Heart left ventricle (tissue), 16 donors: ENCODE measurements at regions of chr9 and their contacts with region 1.

Region 1: GRCh38 chr9:394347-395052 is 179.8 kb downstream of the DOCK8 start:
- DNase-seq: no peak
- ATAC-seq: no peak
- H3K4me3 ChIP-seq: no peak overlapping the region
- H3K27ac ChIP-seq: no peak overlapping the region
- H3K4me1 ChIP-seq: no peaks in the 10 kb centered on the region
- H3K27me3 ChIP-seq: no peaks in the 10 kb centered on the region
- CTCF ChIP-seq: no peak
- POLR2A ChIP-seq: no peak

Region 2: GRCh38 chr9:419571-420402 is 25.3 kb after region 1 on chr9:
- intact Hi-C with region 1: loop called in 1 of 10 experiments (anchors 2 kb)
- DNase-seq: no peak
- ATAC-seq: no peak
- H3K4me3 ChIP-seq: no peak overlapping the region
- H3K27ac ChIP-seq: no peak overlapping the region
- H3K4me1 ChIP-seq: no peaks in the 10 kb centered on the region
- H3K27me3 ChIP-seq: no peaks in the 10 kb centered on the region
- CTCF ChIP-seq: no peak
- POLR2A ChIP-seq: no peak

Region 3: GRCh38 chr9:792282-793260 is 398.1 kb after region 1 on chr9:
- intact Hi-C with region 1: loop called in 1 of 10 experiments (anchors 10 kb)
- DNase-seq: no peak
- ATAC-seq: no peak
- H3K4me3 ChIP-seq: no peak overlapping the region
- H3K27ac ChIP-seq: no peak overlapping the region
- H3K4me1 ChIP-seq: no peaks in the 10 kb centered on the region
- H3K27me3 ChIP-seq: peaks cover 0 to 4% (median 0%) of the 10 kb centered on the region in 9 donors
- CTCF ChIP-seq: no peak
- POLR2A ChIP-seq: no peak